Posterior vena cava (tissue), 2 donors: ENCODE measurements at regions of chr18 and their contacts with region 1.

Region 1: DNA sequence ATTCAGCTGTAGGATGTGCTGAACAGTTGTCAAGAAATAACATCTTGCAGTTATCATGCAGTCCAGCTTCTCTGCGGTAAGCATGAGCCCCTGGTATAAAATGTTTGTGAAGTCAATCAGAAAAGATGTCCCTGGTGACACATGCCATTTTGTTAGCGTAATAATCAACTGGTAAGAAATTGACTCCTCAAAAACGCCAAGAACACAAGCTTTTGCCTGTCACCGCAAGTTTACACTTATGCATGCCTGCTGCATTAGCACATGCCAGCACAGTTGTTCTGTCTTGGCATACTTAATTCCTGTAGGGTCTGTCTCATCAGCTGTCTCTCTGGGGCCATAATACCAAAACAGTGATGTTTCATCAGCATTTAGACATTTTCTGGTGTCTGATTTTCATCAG is 524.8 kb upstream of the DSEL start:
- DNase-seq: no peak

Region 2: GRCh38 chr18:66662632-66663031 is 1378.7 kb before region 1 on chr18:
- intact Hi-C with region 1: no loop called
- DNase-seq: no peak

Region 3: GRCh38 chr18:68284236-68284780 is 243.0 kb after region 1 on chr18:
- intact Hi-C with region 1: loop called in 1 of 2 experiments (anchors 10 kb)
- DNase-seq: no peak